ENCODE measurements at regions of chr19 and their contacts with region 1.

Region 1: DNA sequence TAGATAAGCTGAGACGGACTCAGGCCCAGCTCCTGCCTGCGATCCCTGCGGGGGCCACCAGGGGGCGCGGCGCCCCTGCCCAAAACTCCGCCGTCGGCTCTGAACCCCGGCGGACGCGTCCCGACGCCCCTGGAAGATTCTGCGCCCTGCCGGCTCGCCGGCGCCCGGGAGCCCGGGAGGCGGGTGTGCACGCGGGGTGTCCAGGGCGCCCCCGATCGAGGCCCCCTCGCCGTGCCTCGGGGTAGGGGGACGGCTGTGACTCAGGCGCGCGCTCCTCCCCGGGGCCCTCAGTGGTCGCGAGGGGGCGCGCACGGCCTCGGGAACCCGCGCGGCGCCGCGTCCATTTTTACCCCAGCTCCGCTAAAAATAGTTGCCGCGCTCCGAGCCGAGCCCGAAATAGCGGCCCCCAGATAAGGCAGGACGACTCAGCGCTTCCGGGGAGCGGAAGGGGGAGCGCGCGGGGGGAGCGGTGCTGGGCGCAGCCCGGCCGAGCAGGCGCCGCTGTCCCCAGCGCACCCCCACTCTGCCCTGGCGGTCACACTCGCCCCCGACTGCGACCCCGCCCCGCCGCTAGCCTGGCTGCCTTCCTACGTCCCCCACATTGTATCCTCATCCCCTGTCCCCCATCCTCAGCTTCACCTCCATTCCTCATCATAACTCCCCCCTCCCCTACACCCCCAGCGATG is 16.0 kb upstream of the ERCC1 start:
- DNase-seq: peak; percentile 94
- ATAC-seq: peak; percentile 74

Region 2: GRCh38 chr19:45478454-45479238 is 38.9 kb after region 1 on chr19:
- intact Hi-C with region 1: loop called (anchors 5 kb)
- DNase-seq: peak; percentile 85
- ATAC-seq: peak; percentile 97